ENCODE measurements at regions of chr13 and their contacts with region 1.

Region 1: GRCh38 chr13:64662887-64663593 is 2567.1 kb downstream of the PCDH9 start:
- DNase-seq: no peak
- H3K4me3 ChIP-seq: no peak overlapping the region
- H3K27ac ChIP-seq: no peak overlapping the region
- H3K4me1 ChIP-seq: no peaks in the 10 kb centered on the region
- H3K27me3 ChIP-seq: no peaks in the 10 kb centered on the region
- CTCF ChIP-seq: no peak
- POLR2A ChIP-seq: no peak

Region 2: GRCh38 chr13:64061649-64062048 is 601.4 kb before region 1 on chr13:
- intact Hi-C with region 1: loop called (anchors 5 kb)
- DNase-seq: no peak
- H3K4me3 ChIP-seq: no peak overlapping the region
- H3K27ac ChIP-seq: no peak overlapping the region
- H3K4me1 ChIP-seq: no peaks in the 10 kb centered on the region
- H3K27me3 ChIP-seq: no peaks in the 10 kb centered on the region
- CTCF ChIP-seq: no peak
- POLR2A ChIP-seq: no peak

Region 3: GRCh38 chr13:64239372-64239771 is 423.7 kb before region 1 on chr13:
- intact Hi-C with region 1: no loop called
- DNase-seq: no peak
- H3K4me3 ChIP-seq: no peak overlapping the region
- H3K27ac ChIP-seq: no peak overlapping the region
- H3K4me1 ChIP-seq: no peaks in the 10 kb centered on the region
- H3K27me3 ChIP-seq: no peaks in the 10 kb centered on the region
- CTCF ChIP-seq: no peak
- POLR2A ChIP-seq: no peak

Region 4: DNA sequence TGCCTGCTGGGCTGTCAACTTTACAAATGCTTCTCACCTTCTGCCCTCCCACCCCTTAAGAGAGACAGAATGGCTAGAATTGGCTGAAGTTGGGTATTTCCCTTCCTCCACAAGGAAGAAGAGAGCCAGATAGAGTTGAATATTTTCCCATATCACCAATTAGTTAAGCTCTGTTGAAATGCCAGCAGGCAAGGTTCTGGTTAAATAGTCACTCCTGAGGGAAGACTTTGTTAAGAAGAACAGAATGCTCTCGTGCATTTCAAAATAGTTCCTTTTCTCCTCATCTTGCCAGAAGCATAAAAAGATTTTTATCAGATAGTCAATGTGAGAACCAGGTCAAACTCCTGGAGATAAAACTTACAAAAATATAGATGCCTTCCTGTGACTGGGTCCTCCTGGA is 390.4 kb before region 1 on chr13:
- intact Hi-C with region 1: no loop called
- DNase-seq: no peak
- H3K4me3 ChIP-seq: no peak overlapping the region
- H3K27ac ChIP-seq: no peak overlapping the region
- H3K4me1 ChIP-seq: no peaks in the 10 kb centered on the region
- H3K27me3 ChIP-seq: no peaks in the 10 kb centered on the region
- CTCF ChIP-seq: no peak
- POLR2A ChIP-seq: no peak